ENCODE measurements at regions of chr2 and their contacts with region 1.

Region 1: GRCh38 chr2:231713730-231714430 is 5.6 kb downstream of the PTMA start:
- DNase-seq: peak; percentile 90
- ATAC-seq: peak; percentile 18
- H3K4me3 ChIP-seq: no peak overlapping the region
- H3K4me3 Mint-ChIP-seq: peak overlapping the region; percentile 73
- H3K27ac ChIP-seq: peak overlapping the region; percentile 64 to 75
- H3K27ac Mint-ChIP-seq: peak overlapping the region; percentile 91
- H3K4me1 ChIP-seq: peaks cover 49 to 68% of the 10 kb centered on the region in 2 donors
- H3K4me1 Mint-ChIP-seq: peaks cover 66% of the 10 kb centered on the region
- H3K27me3 ChIP-seq: no peaks in the 10 kb centered on the region
- H3K27me3 Mint-ChIP-seq: no peaks in the 10 kb centered on the region
- CTCF ChIP-seq: peak; percentile 95

Region 2: DNA sequence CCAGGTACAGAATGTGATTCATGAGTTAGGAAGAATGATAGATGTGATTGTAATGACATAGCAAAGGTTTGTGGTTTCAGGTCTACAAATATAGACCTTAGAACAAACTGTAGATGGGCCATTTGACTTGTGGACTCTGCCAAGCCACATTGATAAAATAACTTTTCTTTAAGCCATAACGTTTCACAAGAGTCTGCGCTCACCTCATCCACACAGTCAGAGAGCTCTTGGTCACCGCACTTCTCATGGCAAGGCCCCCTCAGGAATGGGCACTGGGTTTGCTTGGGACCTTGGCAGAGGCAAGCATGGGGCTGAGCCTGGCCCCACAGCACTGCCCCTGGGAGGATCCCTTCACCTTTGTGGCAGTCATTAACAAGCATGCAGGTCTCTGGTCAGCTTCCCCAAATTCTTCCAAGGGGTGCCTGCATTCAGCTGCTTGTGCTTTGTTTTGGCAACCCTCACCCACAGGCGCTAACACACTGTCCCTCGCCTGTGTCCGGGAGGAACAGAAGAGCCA is 501.5 kb before region 1 on chr2:
- CTCF ChIA-PET with region 1: no interaction called
- POLR2A ChIA-PET with region 1: no interaction called
- intact Hi-C with region 1: no loop called
- DNase-seq: no peak
- ATAC-seq: no peak
- H3K4me3 ChIP-seq: no peak overlapping the region
- H3K4me3 Mint-ChIP-seq: no peak overlapping the region
- H3K27ac ChIP-seq: no peak overlapping the region
- H3K27ac Mint-ChIP-seq: no peak overlapping the region
- H3K4me1 ChIP-seq: no peaks in the 10 kb centered on the region
- H3K4me1 Mint-ChIP-seq: no peaks in the 10 kb centered on the region
- H3K27me3 ChIP-seq: no peaks in the 10 kb centered on the region
- H3K27me3 Mint-ChIP-seq: no peaks in the 10 kb centered on the region
- CTCF ChIP-seq: no peak

Region 3: DNA sequence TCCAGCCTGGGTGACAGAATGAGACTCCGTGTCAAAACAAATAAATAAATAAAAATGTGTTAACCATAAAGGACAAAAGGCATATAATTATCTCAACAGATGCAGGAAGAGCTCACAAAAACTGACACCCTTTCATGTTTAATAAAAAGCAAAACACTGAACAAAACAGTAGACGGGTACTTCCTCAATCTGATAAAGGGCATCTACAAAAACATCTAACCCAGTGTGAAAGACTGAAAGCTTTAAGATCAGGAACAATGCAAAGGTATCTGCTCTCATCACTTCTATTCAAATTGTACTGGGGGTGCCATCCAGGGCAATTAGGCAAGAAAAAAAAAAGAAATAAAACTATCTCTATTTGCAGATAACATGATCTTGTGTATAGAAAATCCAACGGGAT is 237.9 kb before region 1 on chr2:
- CTCF ChIA-PET with region 1: no interaction called
- POLR2A ChIA-PET with region 1: no interaction called
- intact Hi-C with region 1: no loop called
- DNase-seq: no peak
- ATAC-seq: no peak
- H3K4me3 ChIP-seq: no peak overlapping the region
- H3K4me3 Mint-ChIP-seq: no peak overlapping the region
- H3K27ac ChIP-seq: no peak overlapping the region
- H3K27ac Mint-ChIP-seq: no peak overlapping the region
- H3K4me1 ChIP-seq: no peaks in the 10 kb centered on the region
- H3K4me1 Mint-ChIP-seq: no peaks in the 10 kb centered on the region
- H3K27me3 ChIP-seq: no peaks in the 10 kb centered on the region
- H3K27me3 Mint-ChIP-seq: no peaks in the 10 kb centered on the region
- CTCF ChIP-seq: no peak

Region 4: GRCh38 chr2:231530091-231531011 is 183.5 kb before region 1 on chr2 and contains the start of gene NMUR1:
- CTCF ChIA-PET with region 1: no interaction called
- POLR2A ChIA-PET with region 1: no interaction called
- intact Hi-C with region 1: loop called (anchors 1 kb)
- DNase-seq: peak; percentile 81
- ATAC-seq: peak; percentile 96
- H3K4me3 ChIP-seq: peak within 1 kb of the TSS in 2 of 5 experiments; percentile 31 to 46
- H3K4me3 Mint-ChIP-seq: peak within 1 kb of the TSS; percentile 49
- H3K27ac ChIP-seq: no peak within 1 kb of the TSS
- H3K27ac Mint-ChIP-seq: no peak within 1 kb of the TSS
- H3K4me1 ChIP-seq: peaks cover 11 to 14% of the 10 kb centered on the region in 2 donors
- H3K4me1 Mint-ChIP-seq: peaks cover 9% of the 10 kb centered on the region
- H3K27me3 ChIP-seq: peaks cover 0 to 28% (median 8%) of the 10 kb centered on the region in 4 experiments
- H3K27me3 Mint-ChIP-seq: peaks cover 28% of the 10 kb centered on the region
- CTCF ChIP-seq: peak; percentile 91
- total RNA-seq, gene NMUR1: 0.10 TPM in 1 of 2 replicates, not detected in the other

Region 5: DNA sequence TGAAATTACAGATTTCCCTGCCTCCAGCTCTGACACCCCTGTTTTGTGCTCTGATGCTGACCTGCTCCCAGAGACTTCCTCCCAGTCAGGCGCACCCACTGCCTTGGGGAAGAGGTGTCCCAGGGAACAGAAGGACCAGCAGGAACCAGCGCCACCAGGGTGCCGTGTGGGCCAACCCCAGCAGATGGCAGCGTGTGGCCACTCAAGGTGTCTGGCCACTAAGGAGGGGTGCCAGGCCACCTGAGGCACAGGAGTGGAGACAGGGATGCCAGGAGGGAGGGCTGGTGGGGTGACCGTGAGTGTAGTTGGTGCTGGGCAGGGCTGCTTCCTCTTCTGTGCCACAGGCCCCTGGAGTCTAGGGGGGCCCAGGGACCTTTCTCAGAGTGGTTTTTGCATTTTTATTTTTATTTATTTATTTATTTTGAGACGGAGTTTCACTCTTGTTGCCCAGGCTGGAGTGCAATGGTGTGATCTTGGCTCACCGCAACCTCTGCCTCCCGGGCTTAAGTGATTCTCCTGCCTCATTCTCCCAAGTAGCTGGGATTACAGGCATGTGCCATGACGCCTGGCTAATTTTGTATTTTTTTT is 65.2 kb before region 1 on chr2:
- CTCF ChIA-PET with region 1: interaction called, 122 read pairs
- POLR2A ChIA-PET with region 1: interaction called, 14 read pairs
- intact Hi-C with region 1: loop called (anchors 1 kb)
- DNase-seq: peak; percentile 77
- ATAC-seq: peak; percentile 97
- H3K4me3 ChIP-seq: no peak overlapping the region
- H3K4me3 Mint-ChIP-seq: no peak overlapping the region
- H3K27ac ChIP-seq: no peak overlapping the region
- H3K27ac Mint-ChIP-seq: peak overlapping the region; percentile 74
- H3K4me1 ChIP-seq: peaks cover 0 to 10% of the 10 kb centered on the region in 2 donors
- H3K4me1 Mint-ChIP-seq: peaks cover 7% of the 10 kb centered on the region
- H3K27me3 ChIP-seq: no peaks in the 10 kb centered on the region
- H3K27me3 Mint-ChIP-seq: no peaks in the 10 kb centered on the region
- CTCF ChIP-seq: peak; percentile 79

Region 6: GRCh38 chr2:231687133-231687852 is 26.6 kb before region 1 on chr2:
- CTCF ChIA-PET with region 1: interaction called, 785 read pairs
- POLR2A ChIA-PET with region 1: interaction called, 75 read pairs
- intact Hi-C with region 1: loop called (anchors 1 kb)
- DNase-seq: peak; percentile 84
- ATAC-seq: peak; percentile 91
- H3K4me3 ChIP-seq: no peak overlapping the region
- H3K4me3 Mint-ChIP-seq: peak overlapping the region; percentile 14
- H3K27ac ChIP-seq: no peak overlapping the region
- H3K27ac Mint-ChIP-seq: peak overlapping the region; percentile 57
- H3K4me1 ChIP-seq: peaks cover 15 to 36% of the 10 kb centered on the region in 2 donors
- H3K4me1 Mint-ChIP-seq: peaks cover 38% of the 10 kb centered on the region
- H3K27me3 ChIP-seq: no peaks in the 10 kb centered on the region
- H3K27me3 Mint-ChIP-seq: no peaks in the 10 kb centered on the region
- CTCF ChIP-seq: peak; percentile 70

Region 7: DNA sequence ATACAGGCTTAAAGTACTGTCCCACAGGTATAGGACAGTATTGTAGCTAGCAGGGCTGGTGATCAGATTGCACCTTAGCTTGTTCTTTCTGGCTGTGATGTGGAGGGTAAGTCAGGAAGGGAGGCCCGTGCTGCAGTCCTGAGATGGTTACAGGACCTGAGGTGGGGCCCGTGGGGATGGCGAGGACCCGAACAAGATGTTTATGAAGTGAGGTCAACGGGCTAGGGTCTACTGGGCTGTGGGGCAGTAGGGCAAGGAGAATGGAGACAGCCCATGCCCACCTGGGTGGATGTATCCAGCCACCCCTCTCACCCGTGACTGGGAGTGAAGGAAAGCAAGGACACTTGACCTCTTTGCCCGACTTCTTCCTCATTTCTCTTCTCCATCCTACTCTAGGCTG is 12.3 kb after region 1 on chr2:
- CTCF ChIA-PET with region 1: interaction called, 19 read pairs
- POLR2A ChIA-PET with region 1: no interaction called
- intact Hi-C with region 1: no loop called
- DNase-seq: no peak
- ATAC-seq: no peak
- H3K4me3 ChIP-seq: no peak overlapping the region
- H3K4me3 Mint-ChIP-seq: no peak overlapping the region
- H3K27ac ChIP-seq: no peak overlapping the region
- H3K27ac Mint-ChIP-seq: no peak overlapping the region
- H3K4me1 ChIP-seq: peaks cover under 1 to 4% of the 10 kb centered on the region in 2 donors
- H3K4me1 Mint-ChIP-seq: peaks cover 4% of the 10 kb centered on the region
- H3K27me3 ChIP-seq: no peaks in the 10 kb centered on the region
- H3K27me3 Mint-ChIP-seq: no peaks in the 10 kb centered on the region
- CTCF ChIP-seq: no peak

Region 8: DNA sequence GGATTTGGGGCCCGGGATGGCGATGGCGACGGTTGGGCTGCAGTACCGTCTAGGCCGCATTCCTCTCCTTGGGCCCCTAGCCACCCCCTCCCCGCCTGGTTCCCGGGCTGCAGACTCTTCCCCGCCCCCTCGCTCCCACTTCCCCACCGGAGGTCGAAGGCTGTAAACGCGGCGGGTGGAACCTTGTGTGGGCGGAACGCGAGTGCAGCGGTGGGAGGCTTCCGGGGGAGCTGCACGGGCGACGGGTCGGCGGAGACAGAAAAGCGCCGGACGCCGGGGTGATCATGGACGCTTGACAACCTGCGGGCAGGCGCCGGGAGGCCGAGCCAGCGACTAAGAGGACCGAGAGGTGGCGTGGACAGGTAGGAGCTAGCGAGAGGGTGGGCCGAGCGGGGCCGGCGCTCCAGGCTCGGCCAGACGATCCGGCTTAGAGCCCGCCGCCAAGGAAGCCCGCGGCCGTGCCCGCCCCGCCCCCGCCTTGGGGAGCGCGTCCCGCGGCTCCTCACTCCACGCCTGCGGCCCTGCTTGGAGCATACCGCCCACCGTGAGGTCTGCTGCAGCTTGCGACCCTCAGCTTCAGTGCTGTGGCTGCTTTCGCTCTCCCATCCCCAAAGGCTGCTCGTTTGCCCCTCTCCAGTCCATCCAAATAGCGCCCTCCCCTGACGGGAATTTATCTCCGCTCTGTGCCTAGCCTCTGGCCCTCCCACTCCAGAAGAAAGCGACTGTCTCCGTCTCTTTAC is 72.5 kb after region 1 on chr2 and contains the start of gene COPS7B:
- CTCF ChIA-PET with region 1: interaction called, 12 read pairs
- POLR2A ChIA-PET with region 1: interaction called, 3 read pairs
- intact Hi-C with region 1: loop called (anchors 1 kb)
- DNase-seq: peak; percentile 89
- ATAC-seq: peak; percentile 53
- H3K4me3 ChIP-seq: peak within 1 kb of the TSS; percentile 52 to 92 (median 85)
- H3K4me3 Mint-ChIP-seq: peak within 1 kb of the TSS; percentile 85
- H3K27ac ChIP-seq: peak within 1 kb of the TSS; percentile 38 to 73
- H3K27ac Mint-ChIP-seq: peak within 1 kb of the TSS; percentile 90
- H3K4me1 ChIP-seq: peaks cover 32% of the 10 kb centered on the region in 2 donors
- H3K4me1 Mint-ChIP-seq: peaks cover 70% of the 10 kb centered on the region
- H3K27me3 ChIP-seq: no peaks in the 10 kb centered on the region
- H3K27me3 Mint-ChIP-seq: no peaks in the 10 kb centered on the region
- CTCF ChIP-seq: peak; percentile 64
- total RNA-seq, gene COPS7B: 52.7 and 58.5 TPM in 2 replicates

Region 9: DNA sequence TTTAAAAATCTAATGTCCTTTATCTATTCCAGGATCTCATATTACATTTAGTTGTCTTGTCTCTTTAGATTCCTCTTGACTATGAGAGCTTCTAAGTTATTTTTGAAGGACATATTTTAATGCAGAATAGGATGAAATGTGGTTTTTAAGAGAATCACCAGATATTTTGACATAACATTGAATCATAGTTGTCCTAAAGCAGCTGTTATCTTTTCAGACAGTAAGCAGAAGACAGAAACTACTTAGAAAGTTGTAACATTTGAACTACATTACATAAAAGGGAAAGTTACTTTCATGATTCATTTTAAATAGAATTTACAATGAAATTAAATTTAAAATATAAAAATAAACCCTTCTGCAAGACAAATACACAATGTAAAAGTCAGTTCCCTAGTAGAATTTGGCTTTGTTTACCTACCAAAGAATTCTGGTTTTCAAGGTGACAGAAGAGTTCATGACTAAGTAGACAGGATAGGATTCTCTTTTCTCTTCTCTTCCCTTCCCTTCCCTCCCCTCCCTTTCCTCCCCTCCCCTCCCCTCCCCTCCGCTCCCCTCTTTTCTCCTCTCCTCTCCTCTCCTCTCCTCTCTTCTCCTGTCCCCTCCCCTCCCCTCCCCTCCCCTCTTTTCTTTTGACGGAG is 433.7 kb after region 1 on chr2:
- CTCF ChIA-PET with region 1: no interaction called
- POLR2A ChIA-PET with region 1: no interaction called
- intact Hi-C with region 1: no loop called
- DNase-seq: no peak
- ATAC-seq: no peak
- H3K4me3 ChIP-seq: no peak overlapping the region
- H3K4me3 Mint-ChIP-seq: no peak overlapping the region
- H3K27ac ChIP-seq: no peak overlapping the region
- H3K27ac Mint-ChIP-seq: no peak overlapping the region
- H3K4me1 ChIP-seq: no peaks in the 10 kb centered on the region
- H3K4me1 Mint-ChIP-seq: no peaks in the 10 kb centered on the region
- H3K27me3 ChIP-seq: no peaks in the 10 kb centered on the region
- H3K27me3 Mint-ChIP-seq: no peaks in the 10 kb centered on the region
- CTCF ChIP-seq: no peak

Measured in B cell (primary cell).